ENCODE measurements at regions of chr1 and their contacts with region 1.

Region 1: DNA sequence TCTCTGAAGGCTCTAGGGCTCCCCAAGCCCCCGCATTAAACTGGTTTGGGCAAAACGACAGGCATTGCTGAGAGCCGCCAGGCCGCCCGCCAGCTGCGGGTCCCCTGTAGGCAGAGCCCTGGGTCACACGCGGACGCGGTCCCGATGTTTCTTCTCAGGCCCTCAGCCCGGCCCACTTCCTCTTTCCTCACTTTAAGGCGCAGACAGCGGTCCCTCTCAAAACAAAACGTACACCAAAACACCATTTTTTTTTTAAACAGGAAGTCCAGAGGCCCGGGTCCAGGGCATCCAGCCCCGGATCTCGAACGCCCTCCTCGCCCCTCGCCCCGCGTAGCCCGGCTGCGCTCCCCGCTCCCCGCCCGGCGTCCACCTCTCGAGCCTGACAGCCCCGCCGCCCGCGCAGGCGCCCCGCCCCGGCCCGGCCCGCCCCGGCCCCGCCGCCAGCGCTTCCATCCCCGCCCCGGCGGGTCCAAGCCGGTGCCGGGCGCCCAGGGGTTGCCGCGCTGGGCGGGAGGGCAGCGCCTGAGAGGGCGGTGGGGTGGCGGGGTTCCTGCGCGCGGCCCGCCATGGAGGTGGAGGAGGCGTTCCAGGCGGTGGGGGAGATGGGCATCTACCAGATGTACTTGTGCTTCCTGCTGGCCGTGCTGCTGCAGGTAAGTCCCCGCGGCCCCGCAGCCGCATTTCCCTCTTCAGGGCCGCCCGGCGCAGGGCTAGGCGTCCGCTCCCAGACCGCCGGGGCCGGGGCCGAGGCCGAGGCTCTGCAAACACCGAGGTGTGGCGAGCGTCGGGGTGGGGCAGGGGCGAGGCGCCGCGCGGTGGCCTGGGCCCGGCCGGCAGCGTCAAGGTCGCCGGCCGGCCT is at the start of gene SLC22A15:
- DNase-seq: peak; percentile 14 to 45 (median 22)
- H3K4me3 ChIP-seq: peak within 1 kb of the TSS; percentile 42 to 44
- H3K4me3 Mint-ChIP-seq: peak within 1 kb of the TSS; percentile 86 to 95 (median 89)
- H3K27ac ChIP-seq: no peak within 1 kb of the TSS
- H3K27ac Mint-ChIP-seq: peak within 1 kb of the TSS; percentile 66 to 82 (median 73)
- H3K4me1 ChIP-seq: peaks cover 4% of the 10 kb centered on the region
- H3K4me1 Mint-ChIP-seq: peaks cover 0 to 18% (median 12%) of the 10 kb centered on the region in 4 donors
- H3K27me3 ChIP-seq: peaks cover 6% of the 10 kb centered on the region
- H3K27me3 Mint-ChIP-seq: peaks cover 9 to 16% of the 10 kb centered on the region in 2 donors
- total RNA-seq, gene SLC22A15: 1.2 TPM

Region 2: DNA sequence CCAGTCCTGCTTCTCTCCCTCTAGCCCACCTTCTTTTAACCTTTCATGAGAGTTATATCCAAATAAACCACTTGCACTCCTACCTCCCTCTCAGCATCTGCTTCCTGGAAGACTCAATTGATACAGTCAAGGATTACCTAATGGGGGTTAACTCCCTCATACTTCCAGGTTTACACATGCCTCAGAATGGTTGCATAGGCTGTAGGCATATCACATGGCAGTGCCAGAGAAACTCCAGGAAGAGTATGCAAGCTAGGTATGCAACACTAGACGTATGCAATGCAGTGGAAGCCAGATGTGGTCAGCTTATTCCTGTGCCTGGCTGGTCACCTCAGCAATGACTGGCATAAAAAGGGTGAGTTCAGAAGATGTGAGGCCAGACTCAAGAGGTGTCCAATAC is 367.3 kb before region 1 on chr1:
- CTCF ChIA-PET with region 1: no interaction called
- POLR2A ChIA-PET with region 1: no interaction called
- intact Hi-C with region 1: loop called (anchors 5 kb)
- DNase-seq: no peak
- H3K4me3 ChIP-seq: no peak overlapping the region
- H3K4me3 Mint-ChIP-seq: no peak overlapping the region
- H3K27ac ChIP-seq: no peak overlapping the region
- H3K27ac Mint-ChIP-seq: no peak overlapping the region
- H3K4me1 ChIP-seq: no peaks in the 10 kb centered on the region
- H3K4me1 Mint-ChIP-seq: peaks cover 0 to 2% (median under 1%) of the 10 kb centered on the region in 4 donors
- H3K27me3 ChIP-seq: peaks cover 3% of the 10 kb centered on the region
- H3K27me3 Mint-ChIP-seq: peaks cover 11 to 18% of the 10 kb centered on the region in 2 donors

Measured in CD4-positive, alpha-beta memory T cell (primary cell).